Activated naive CD4-positive, alpha-beta T cell treated with anti-CD3 and anti-CD28 coated beads for 36 hours (primary cell): ENCODE measurements at regions of chr3 and their contacts with region 1.

Region 1: DNA sequence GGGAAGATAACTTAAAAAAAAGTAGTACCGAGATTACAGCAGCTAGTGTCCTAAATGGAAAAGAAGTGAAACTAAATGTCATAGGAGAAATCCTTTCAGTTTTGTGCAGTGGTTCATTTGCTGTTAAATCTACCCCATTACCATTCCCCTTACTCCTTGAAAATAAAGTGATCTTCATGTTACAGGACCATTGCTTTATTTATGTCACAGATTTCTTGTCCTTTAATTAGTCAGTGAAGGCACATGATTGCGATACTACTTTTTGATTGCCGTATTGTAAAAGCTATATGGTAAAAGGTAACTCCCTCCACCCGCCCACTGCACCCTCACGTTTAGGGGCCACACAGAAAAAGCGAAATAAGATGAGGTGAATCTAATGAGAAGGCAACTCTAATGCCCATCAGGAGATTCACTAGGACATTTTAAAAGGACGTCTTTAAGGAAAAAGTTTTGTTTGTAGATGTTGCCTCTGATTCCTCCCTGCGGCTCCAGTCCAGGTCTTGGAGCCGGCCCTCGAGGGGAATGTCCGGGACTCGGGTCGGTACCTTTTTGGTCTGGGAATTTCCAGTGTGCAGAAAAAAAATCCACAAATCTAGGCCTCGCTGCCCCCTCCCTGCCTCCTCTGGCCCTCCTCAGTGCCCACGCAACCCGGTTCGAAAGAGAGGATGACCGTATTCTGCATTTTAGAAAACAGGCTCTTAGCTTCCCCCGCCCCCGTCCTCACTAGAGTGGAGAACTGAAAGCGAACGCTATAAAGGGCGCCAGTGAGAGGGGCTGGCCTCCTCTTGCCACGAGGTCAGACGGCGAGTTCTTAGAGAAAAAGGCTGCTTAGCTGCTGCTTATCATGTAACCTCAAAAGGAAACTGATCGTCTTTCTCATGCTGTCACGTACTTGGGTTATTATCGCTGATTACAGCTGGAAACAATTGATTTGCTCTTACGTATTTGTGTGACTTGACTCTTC is 21.8 kb upstream of the NFKBIZ start:
- DNase-seq: peak; percentile 94
- H3K4me3 Mint-ChIP-seq: peak overlapping the region; percentile 77
- H3K27ac Mint-ChIP-seq: peak overlapping the region; percentile 94
- H3K4me1 Mint-ChIP-seq: peaks cover 60% of the 10 kb centered on the region
- H3K27me3 Mint-ChIP-seq: no peaks in the 10 kb centered on the region

Region 2: DNA sequence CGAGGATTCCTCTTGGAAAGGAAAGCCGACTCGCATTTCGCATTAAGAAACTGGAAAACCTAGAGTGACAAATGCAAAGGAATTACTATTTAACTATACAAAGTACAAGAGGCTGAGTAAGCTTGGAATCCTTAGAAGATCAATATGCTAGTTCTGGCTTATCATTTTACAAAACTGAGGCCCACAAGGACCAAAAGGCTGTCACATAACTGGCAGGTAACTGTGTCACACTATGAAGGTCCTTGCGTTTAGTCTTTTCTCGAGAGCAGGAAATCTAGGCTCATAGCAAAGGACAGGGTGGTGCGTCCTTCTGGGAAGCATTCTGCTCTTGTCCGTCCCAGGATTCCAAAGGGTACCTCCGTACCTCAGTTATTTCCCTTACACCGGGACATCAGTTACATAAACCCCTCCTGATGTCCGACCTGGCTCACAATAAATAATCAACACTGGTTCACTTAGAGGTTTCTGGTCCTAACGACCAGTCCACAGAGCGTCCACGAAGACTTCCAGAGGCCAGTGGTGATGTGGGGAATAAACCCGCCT is 141.6 kb before region 1 on chr3:
- CTCF ChIA-PET with region 1: interaction called, 3 read pairs
- intact Hi-C with region 1: loop called (anchors 1 kb)
- DNase-seq: no peak
- H3K4me3 Mint-ChIP-seq: peak overlapping the region; percentile 98
- H3K27ac Mint-ChIP-seq: peak overlapping the region; percentile 99
- H3K4me1 Mint-ChIP-seq: peaks cover 54% of the 10 kb centered on the region
- H3K27me3 Mint-ChIP-seq: no peaks in the 10 kb centered on the region

Region 3: DNA sequence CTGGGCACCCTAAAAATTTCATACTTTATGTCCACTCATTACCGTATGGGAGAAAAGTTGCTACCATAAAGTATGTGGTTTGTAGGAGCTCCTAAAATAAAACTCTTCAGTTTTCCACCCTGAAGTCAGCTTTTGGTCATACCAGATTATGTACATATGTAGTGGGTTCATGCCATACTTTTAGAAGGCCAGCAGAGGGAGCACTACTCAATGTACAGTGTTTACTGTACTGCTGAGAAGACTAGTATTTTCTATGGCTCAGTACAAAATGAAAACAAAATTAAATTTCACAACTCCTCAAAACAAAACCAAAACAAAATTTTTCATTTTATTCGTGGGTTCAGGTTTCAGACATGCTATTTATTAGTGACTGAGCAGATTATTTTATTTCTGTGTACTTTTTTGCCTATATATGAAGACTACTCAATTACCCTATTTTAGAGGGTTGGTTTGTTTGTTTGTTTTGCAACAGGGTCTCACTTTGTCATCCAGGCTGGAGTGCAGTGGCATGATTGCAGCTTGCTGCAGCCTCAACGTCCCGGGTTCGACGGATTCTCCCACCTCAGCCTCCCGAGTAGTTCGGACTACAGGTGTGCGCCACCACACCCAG is 24.2 kb before region 1 on chr3:
- CTCF ChIA-PET with region 1: interaction called, 16 read pairs
- intact Hi-C with region 1: loop called (anchors 1 kb)
- DNase-seq: peak; percentile 76
- H3K4me3 Mint-ChIP-seq: no peak overlapping the region
- H3K27ac Mint-ChIP-seq: peak overlapping the region; percentile 50
- H3K4me1 Mint-ChIP-seq: peaks cover 37% of the 10 kb centered on the region
- H3K27me3 Mint-ChIP-seq: no peaks in the 10 kb centered on the region

Region 4: GRCh38 chr3:101809178-101810021 is 18.1 kb before region 1 on chr3:
- CTCF ChIA-PET with region 1: interaction called, 9 read pairs
- intact Hi-C with region 1: loop called (anchors 2 kb)
- DNase-seq: peak; percentile 49
- H3K4me3 Mint-ChIP-seq: no peak overlapping the region
- H3K27ac Mint-ChIP-seq: no peak overlapping the region
- H3K4me1 Mint-ChIP-seq: peaks cover 46% of the 10 kb centered on the region
- H3K27me3 Mint-ChIP-seq: no peaks in the 10 kb centered on the region

Region 5: DNA sequence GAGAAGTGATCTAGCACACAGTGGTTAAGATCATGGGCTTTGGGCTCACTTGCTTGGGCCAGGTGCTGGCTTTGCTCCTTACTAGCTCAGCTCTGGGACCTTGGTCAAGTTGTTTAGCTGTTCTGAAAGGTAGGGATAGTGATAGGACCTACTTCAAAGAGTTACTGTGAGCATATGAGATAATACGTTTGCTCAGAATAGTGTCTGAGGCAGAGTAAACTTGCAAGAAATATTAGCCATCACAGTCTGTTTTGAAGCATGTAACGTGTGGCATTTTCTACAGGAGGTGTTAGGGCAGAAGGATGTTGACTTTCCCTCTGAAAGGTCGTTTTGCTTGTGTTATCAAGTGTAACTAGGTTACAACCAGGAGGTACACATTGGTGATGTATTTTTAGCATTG is 12.7 kb before region 1 on chr3:
- CTCF ChIA-PET with region 1: interaction called, 13 read pairs
- intact Hi-C with region 1: loop called (anchors 2 kb)
- DNase-seq: no peak
- H3K4me3 Mint-ChIP-seq: no peak overlapping the region
- H3K27ac Mint-ChIP-seq: no peak overlapping the region
- H3K4me1 Mint-ChIP-seq: peaks cover 60% of the 10 kb centered on the region
- H3K27me3 Mint-ChIP-seq: no peaks in the 10 kb centered on the region

Region 6: GRCh38 chr3:101902041-101902440 is 74.5 kb after region 1 on chr3:
- CTCF ChIA-PET with region 1: no interaction called
- intact Hi-C with region 1: loop called (anchors 1 kb)
- DNase-seq: peak; percentile 69
- H3K4me3 Mint-ChIP-seq: no peak overlapping the region
- H3K27ac Mint-ChIP-seq: no peak overlapping the region
- H3K4me1 Mint-ChIP-seq: peaks cover 17% of the 10 kb centered on the region
- H3K27me3 Mint-ChIP-seq: no peaks in the 10 kb centered on the region

Region 7: GRCh38 chr3:102113411-102114041 is 286.0 kb after region 1 on chr3:
- CTCF ChIA-PET with region 1: no interaction called
- intact Hi-C with region 1: loop called (anchors 1 kb)
- DNase-seq: peak; percentile 24
- H3K4me3 Mint-ChIP-seq: no peak overlapping the region
- H3K27ac Mint-ChIP-seq: peak overlapping the region; percentile 81
- H3K4me1 Mint-ChIP-seq: peaks cover 30% of the 10 kb centered on the region
- H3K27me3 Mint-ChIP-seq: no peaks in the 10 kb centered on the region